ENCODE measurements at regions of chr2 and their contacts with region 1.

Region 1: GRCh38 chr2:86623651-86624541 is at the start of gene RNF103:
- DNase-seq: peak; percentile 97 to 98
- ATAC-seq: peak; percentile 92 to 98 (median 94)
- H3K4me3 ChIP-seq: peak within 1 kb of the TSS; percentile 88
- H3K27ac ChIP-seq: peak within 1 kb of the TSS; percentile 99
- H3K4me1 ChIP-seq: peaks cover 20% of the 10 kb centered on the region
- H3K27me3 ChIP-seq: no peaks in the 10 kb centered on the region
- CTCF ChIP-seq: no peak
- total RNA-seq, gene RNF103: 21.0 to 34.8 (median 25.2) TPM

Region 2: GRCh38 chr2:86464652-86465051 is 159.2 kb before region 1 on chr2:
- intact Hi-C with region 1: no loop called
- DNase-seq: no peak
- ATAC-seq: peak in 2 of 4 donors; percentile 34 to 73
- H3K4me3 ChIP-seq: no peak overlapping the region
- H3K27ac ChIP-seq: no peak overlapping the region
- H3K4me1 ChIP-seq: peaks cover 3% of the 10 kb centered on the region
- H3K27me3 ChIP-seq: no peaks in the 10 kb centered on the region
- CTCF ChIP-seq: no peak

Region 3: DNA sequence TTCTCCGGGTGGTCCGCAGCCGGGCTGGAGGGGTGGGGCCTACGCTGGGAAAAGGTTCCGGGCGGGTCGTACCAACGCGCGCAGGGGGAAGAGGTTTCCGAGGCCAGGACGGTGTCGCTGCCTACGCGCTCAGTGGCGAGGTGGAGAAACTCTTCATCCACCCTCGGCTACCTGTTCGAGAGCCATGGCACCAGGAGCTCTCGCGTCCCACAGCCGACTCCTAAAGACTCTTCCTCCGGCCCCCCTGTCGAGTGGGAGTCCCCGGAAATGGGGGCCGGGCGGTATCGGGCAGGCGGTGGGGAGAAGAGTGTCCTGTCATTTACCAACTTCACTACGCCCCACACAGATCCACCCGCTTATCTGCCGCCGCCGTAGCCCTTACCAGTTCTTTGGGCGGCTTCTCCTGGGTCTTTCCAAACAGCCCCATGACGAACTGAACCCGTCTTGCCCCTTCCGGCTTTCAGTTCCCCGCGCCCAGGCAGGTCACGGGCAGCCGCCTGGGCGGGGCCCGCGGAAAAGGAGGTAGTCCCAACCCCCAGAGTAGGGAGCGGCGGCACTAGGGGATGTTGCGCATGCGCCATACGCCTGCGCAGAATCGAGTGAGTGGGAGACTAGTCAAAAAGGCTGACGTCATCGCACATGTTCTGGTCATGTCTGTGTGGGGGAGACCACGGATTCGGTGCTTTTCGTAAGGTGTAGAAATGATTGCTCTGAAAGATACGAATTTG is 60.8 kb before region 1 on chr2 and contains the start of gene CHMP3:
- intact Hi-C with region 1: loop called in 1 of 2 experiments (anchors 2 kb)
- DNase-seq: peak; percentile 98
- ATAC-seq: peak; percentile 98 to 99 (median 98)
- H3K4me3 ChIP-seq: peak within 1 kb of the TSS; percentile 81
- H3K27ac ChIP-seq: peak within 1 kb of the TSS; percentile 98
- H3K4me1 ChIP-seq: peaks cover 20% of the 10 kb centered on the region
- H3K27me3 ChIP-seq: no peaks in the 10 kb centered on the region
- CTCF ChIP-seq: no peak
- total RNA-seq, gene CHMP3: 84.9 to 133 (median 102) TPM

Region 4: DNA sequence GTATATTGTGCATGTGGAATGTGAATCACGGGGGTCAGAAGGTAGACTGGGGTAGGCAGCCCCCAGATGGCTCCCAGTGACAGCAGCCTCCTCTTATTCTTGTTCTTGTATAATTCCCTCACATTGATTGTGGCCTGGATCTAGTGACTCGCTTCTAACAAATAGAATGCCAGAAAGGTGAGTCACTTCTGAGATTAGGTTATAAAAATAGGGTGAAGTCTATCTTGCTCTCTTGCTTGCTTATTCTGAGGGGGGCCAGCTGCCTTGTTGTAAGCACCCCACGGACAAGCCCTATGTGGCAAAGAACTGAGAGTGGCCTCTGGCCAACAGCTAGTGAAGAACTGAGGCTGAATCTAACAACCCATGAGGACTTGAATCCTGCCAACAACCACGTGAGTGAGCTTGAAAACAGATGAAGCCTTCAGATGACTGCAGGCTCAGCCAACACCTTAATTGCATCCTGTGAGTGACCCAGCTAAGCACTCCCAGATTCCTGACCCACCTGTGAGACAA is 80.6 kb after region 1 on chr2:
- intact Hi-C with region 1: loop called in 1 of 2 experiments (anchors 5 kb)
- DNase-seq: peak in 1 of 2 donors; percentile 52
- ATAC-seq: peak; percentile 90 to 96 (median 92)
- H3K4me3 ChIP-seq: peak overlapping the region; percentile 53
- H3K27ac ChIP-seq: peak overlapping the region; percentile 90
- H3K4me1 ChIP-seq: peaks cover 18% of the 10 kb centered on the region
- H3K27me3 ChIP-seq: no peaks in the 10 kb centered on the region
- CTCF ChIP-seq: no peak